ENCODE measurements at regions of chr17 and their contacts with region 1.

Region 1: GRCh38 chr17:80008383-80008840 is 27.3 kb downstream of the TBC1D16 start:
- DNase-seq: peak; percentile 48 to 82 (median 73)
- ATAC-seq: peak; percentile 82
- H3K4me3 ChIP-seq: no peak overlapping the region
- H3K4me3 Mint-ChIP-seq: no peak overlapping the region
- H3K27ac ChIP-seq: no peak overlapping the region
- H3K27ac Mint-ChIP-seq: no peak overlapping the region
- H3K4me1 ChIP-seq: peaks cover 11% of the 10 kb centered on the region
- H3K4me1 Mint-ChIP-seq: peaks cover 11% of the 10 kb centered on the region
- H3K27me3 ChIP-seq: no peaks in the 10 kb centered on the region
- H3K27me3 Mint-ChIP-seq: no peaks in the 10 kb centered on the region
- CTCF ChIP-seq: peak; percentile 90

Region 2: GRCh38 chr17:79905832-79906231 is 102.6 kb before region 1 on chr17:
- CTCF ChIA-PET with region 1: no interaction called
- POLR2A ChIA-PET with region 1: no interaction called
- intact Hi-C with region 1: no loop called
- DNase-seq: no peak
- ATAC-seq: no peak
- H3K4me3 ChIP-seq: no peak overlapping the region
- H3K4me3 Mint-ChIP-seq: no peak overlapping the region
- H3K27ac ChIP-seq: no peak overlapping the region
- H3K27ac Mint-ChIP-seq: no peak overlapping the region
- H3K4me1 ChIP-seq: no peaks in the 10 kb centered on the region
- H3K4me1 Mint-ChIP-seq: no peaks in the 10 kb centered on the region
- H3K27me3 ChIP-seq: no peaks in the 10 kb centered on the region
- H3K27me3 Mint-ChIP-seq: peaks cover 13% of the 10 kb centered on the region
- CTCF ChIP-seq: no peak

Region 3: DNA sequence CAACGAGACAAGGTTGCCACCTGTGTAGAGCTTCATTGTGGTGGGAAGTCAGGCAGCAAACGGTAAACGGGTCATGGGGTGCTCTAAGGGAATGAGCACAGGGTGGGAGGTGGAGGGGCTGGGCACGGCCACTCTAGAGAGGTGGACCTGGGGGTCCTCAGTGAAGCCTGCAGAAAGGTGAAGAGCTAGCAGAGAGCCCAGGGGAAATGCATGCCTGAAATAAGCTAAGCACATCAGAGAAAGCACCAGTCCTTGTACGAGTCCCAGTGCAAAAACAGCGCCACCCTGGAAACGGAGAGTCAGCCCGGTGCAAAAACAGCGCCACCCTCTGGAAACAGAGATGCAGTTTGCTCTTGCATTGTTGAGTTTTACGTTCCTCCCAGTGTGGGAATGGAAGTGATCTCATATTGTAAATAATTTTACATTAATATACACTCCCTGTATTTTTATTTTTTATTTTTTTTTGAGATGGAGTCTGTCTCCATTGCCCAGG is 37.8 kb before region 1 on chr17:
- CTCF ChIA-PET with region 1: interaction called, 19 read pairs
- POLR2A ChIA-PET with region 1: no interaction called
- intact Hi-C with region 1: no loop called
- DNase-seq: peak in 3 of 9 experiments; percentile 41 to 83 (median 76)
- ATAC-seq: peak; percentile 55
- H3K4me3 ChIP-seq: no peak overlapping the region
- H3K4me3 Mint-ChIP-seq: no peak overlapping the region
- H3K27ac ChIP-seq: no peak overlapping the region
- H3K27ac Mint-ChIP-seq: no peak overlapping the region
- H3K4me1 ChIP-seq: peaks cover 4% of the 10 kb centered on the region
- H3K4me1 Mint-ChIP-seq: peaks cover 7% of the 10 kb centered on the region
- H3K27me3 ChIP-seq: no peaks in the 10 kb centered on the region
- H3K27me3 Mint-ChIP-seq: no peaks in the 10 kb centered on the region
- CTCF ChIP-seq: peak; percentile 44

Region 4: DNA sequence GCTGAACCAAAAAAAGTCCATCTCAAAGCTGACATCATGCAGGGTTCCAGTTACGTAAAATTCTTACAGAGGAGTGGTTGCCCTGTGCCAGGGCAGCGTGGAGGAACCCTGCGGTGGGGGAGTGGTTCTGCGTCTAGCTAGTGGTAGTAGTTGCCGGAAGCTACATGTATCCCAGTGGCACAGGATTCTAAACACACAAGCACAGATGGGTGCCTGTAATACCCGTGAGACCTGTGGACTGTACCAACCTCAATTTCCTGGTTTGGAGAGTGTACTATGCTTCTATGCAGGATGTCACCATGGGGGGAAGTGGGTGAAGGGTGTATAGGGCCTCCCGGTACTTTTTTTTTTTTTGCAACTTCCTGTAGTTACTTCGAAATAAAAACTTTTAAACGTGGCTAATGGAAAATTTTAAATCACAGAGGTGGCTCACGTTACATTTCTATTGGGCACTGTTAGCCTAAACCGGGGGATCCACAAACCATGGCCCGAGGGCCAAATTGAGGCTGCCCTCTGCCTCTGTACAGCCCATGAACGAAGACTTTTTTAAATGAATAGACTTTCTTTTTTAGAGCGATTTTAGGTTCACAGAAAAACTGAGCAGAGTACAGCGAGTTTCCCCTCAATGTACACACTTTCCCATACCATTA is 11.3 kb before region 1 on chr17:
- CTCF ChIA-PET with region 1: interaction called, 24 read pairs
- POLR2A ChIA-PET with region 1: interaction called, 3 read pairs
- intact Hi-C with region 1: no loop called
- DNase-seq: peak; percentile 59 to 97 (median 77)
- ATAC-seq: peak; percentile 94
- H3K4me3 ChIP-seq: peak overlapping the region; percentile 35 to 42
- H3K4me3 Mint-ChIP-seq: peak overlapping the region; percentile 75
- H3K27ac ChIP-seq: peak overlapping the region; percentile 63 to 88
- H3K27ac Mint-ChIP-seq: peak overlapping the region; percentile 94
- H3K4me1 ChIP-seq: peaks cover 50% of the 10 kb centered on the region
- H3K4me1 Mint-ChIP-seq: peaks cover 50% of the 10 kb centered on the region
- H3K27me3 ChIP-seq: peaks cover 0 to 6% of the 10 kb centered on the region in 2 experiments
- H3K27me3 Mint-ChIP-seq: no peaks in the 10 kb centered on the region
- CTCF ChIP-seq: no peak

Region 5: DNA sequence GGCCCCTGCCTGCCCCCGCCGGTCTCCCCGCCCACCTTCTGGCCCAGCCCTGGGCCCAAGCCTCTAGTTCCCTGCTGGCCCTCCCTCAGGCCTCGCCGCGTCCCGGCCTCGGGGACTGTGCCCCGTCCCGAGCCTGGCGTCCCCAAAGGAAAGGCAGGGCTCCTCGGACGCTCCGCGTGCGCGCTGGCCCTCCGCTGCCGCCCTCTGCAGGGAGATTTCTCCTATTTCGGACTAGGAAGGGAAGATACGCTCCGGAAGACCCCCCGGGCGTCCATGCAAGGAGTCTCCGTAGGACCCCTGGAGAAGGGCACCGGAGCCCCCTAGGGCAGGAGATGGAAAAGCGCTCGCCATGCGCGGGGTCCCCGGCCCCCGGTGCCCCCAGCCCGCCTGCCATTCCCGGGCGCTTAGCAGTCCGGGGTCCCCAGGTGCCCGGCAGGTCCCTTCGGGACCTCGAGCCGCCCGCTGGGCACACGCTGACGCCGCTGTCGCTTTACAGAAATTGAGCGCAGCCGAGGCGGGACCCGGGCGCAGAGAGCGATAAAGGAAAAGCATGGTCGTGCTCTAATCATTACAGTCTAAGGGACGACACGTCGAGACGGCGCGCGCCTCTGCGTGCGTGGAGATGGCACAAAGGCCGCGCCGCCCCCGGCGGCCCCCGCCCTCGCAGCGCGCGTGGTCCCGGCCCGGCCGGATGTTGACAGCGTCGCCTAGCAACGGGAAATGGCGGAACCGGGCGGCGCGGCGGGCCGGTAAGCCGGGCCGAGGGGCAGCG is 27.7 kb after region 1 on chr17 and contains the start of gene CCDC40:
- CTCF ChIA-PET with region 1: interaction called, 5 read pairs
- POLR2A ChIA-PET with region 1: no interaction called
- intact Hi-C with region 1: loop called in 1 of 2 experiments (anchors 1 kb)
- DNase-seq: peak; percentile 66 to 93 (median 79)
- ATAC-seq: peak; percentile 79
- H3K4me3 ChIP-seq: peak within 1 kb of the TSS; percentile 64 to 86
- H3K4me3 Mint-ChIP-seq: peak within 1 kb of the TSS; percentile 89
- H3K27ac ChIP-seq: peak within 1 kb of the TSS; percentile 75 to 80
- H3K27ac Mint-ChIP-seq: peak within 1 kb of the TSS; percentile 49
- H3K4me1 ChIP-seq: peaks cover 12% of the 10 kb centered on the region
- H3K4me1 Mint-ChIP-seq: peaks cover 13% of the 10 kb centered on the region
- H3K27me3 ChIP-seq: peaks cover 0 to 6% of the 10 kb centered on the region in 2 experiments
- H3K27me3 Mint-ChIP-seq: peaks cover 10% of the 10 kb centered on the region
- CTCF ChIP-seq: peak; percentile 25
- total RNA-seq, gene CCDC40: 1.0 to 1.2 TPM

Region 6: DNA sequence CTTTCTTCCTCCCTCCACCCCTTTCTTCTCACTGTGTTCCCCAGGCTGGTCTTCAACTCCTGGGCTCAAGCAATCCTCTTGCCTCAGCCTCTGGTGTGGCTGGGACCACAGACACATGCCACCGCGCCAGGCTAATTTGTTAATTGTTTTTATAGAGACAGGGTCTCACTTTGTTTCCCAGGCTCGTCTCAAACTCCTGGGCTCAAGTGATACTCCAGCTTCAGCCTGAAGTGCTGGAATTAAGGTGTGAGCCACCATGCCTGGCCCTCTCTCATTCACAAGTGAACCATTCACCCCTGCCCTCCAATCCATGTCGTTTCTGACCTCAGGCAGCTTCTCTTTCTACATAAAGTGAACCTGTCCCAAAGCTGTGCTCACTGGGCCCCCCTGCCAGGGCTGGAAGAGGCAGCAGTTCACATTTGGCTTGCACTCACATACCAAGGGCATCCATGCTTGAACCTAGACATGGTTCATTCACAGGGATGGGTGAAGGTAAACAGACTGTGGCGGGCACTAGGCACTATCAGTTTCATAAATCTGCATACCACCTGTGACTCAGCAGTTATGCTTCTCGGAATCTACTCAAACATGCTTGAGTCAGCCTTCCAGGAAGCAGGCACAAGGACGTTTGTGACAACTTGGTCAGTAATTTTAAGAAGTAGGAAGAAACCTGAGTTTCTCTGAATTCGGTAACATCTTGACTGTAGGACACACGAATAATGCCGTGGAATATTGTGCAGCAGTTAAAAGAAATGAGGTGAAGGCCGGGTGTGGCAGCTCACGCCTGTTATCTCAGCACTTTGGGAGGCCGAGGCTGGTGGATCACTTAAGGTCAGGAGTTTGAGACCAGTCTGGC is 246.2 kb after region 1 on chr17:
- CTCF ChIA-PET with region 1: no interaction called
- POLR2A ChIA-PET with region 1: no interaction called
- intact Hi-C with region 1: loop called in 1 of 2 experiments (anchors 5 kb)
- DNase-seq: peak in 5 of 9 experiments; percentile 33 to 75 (median 54)
- ATAC-seq: peak; percentile 34
- H3K4me3 ChIP-seq: no peak overlapping the region
- H3K4me3 Mint-ChIP-seq: no peak overlapping the region
- H3K27ac ChIP-seq: peak overlapping the region in 1 of 2 experiments; percentile 51
- H3K27ac Mint-ChIP-seq: peak overlapping the region; percentile 85
- H3K4me1 ChIP-seq: peaks cover 7% of the 10 kb centered on the region
- H3K4me1 Mint-ChIP-seq: peaks cover 28% of the 10 kb centered on the region
- H3K27me3 ChIP-seq: no peaks in the 10 kb centered on the region
- H3K27me3 Mint-ChIP-seq: no peaks in the 10 kb centered on the region
- CTCF ChIP-seq: no peak

Region 7: GRCh38 chr17:80737106-80738019 is 729.0 kb after region 1 on chr17:
- CTCF ChIA-PET with region 1: no interaction called
- POLR2A ChIA-PET with region 1: no interaction called
- intact Hi-C with region 1: no loop called
- DNase-seq: no peak
- ATAC-seq: no peak
- H3K4me3 ChIP-seq: no peak overlapping the region
- H3K4me3 Mint-ChIP-seq: no peak overlapping the region
- H3K27ac ChIP-seq: no peak overlapping the region
- H3K27ac Mint-ChIP-seq: peak overlapping the region; percentile 95
- H3K4me1 ChIP-seq: peaks cover 48% of the 10 kb centered on the region
- H3K4me1 Mint-ChIP-seq: peaks cover 59% of the 10 kb centered on the region
- H3K27me3 ChIP-seq: no peaks in the 10 kb centered on the region
- H3K27me3 Mint-ChIP-seq: no peaks in the 10 kb centered on the region
- CTCF ChIP-seq: no peak

Region 8: GRCh38 chr17:80981062-80981902 is 972.9 kb after region 1 on chr17:
- CTCF ChIA-PET with region 1: no interaction called
- POLR2A ChIA-PET with region 1: no interaction called
- intact Hi-C with region 1: loop called in 1 of 2 experiments (anchors 5 kb)
- DNase-seq: peak in 6 of 9 experiments; percentile 25 to 66 (median 56)
- ATAC-seq: peak; percentile 74
- H3K4me3 ChIP-seq: no peak overlapping the region
- H3K4me3 Mint-ChIP-seq: no peak overlapping the region
- H3K27ac ChIP-seq: no peak overlapping the region
- H3K27ac Mint-ChIP-seq: no peak overlapping the region
- H3K4me1 ChIP-seq: peaks cover 6% of the 10 kb centered on the region
- H3K4me1 Mint-ChIP-seq: peaks cover 7% of the 10 kb centered on the region
- H3K27me3 ChIP-seq: peaks cover 2 to 5% of the 10 kb centered on the region in 2 experiments
- H3K27me3 Mint-ChIP-seq: peaks cover 23% of the 10 kb centered on the region
- CTCF ChIP-seq: peak; percentile 88

Measured in CD8-positive, alpha-beta T cell (primary cell).